ENCODE measurements at regions of chr13 and their contacts with region 1.

Region 1: DNA sequence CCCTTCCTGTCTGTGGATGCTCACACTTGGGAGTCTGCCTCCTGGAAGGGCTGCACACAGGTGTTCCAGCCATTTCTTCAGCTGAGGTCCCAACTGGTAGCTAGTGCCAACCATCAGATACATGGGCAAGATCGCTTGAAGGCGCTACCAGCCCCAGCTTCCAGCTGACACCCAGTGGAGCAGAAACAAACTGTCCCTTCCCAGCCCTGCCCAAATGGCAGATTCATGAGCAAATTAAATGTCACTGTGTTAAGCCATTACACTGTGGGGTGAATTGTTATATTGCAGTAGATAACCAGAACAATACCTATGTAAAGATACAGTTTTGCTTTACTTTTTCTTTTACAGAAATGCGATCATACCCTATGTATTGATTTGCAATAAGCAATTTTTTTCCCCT is 17.6 kb downstream of the ING1 start:
- DNase-seq: no peak
- ATAC-seq: no peak
- H3K4me3 ChIP-seq: no peak overlapping the region
- H3K27ac ChIP-seq: no peak overlapping the region
- H3K4me1 ChIP-seq: no peaks in the 10 kb centered on the region
- H3K27me3 ChIP-seq: no peaks in the 10 kb centered on the region

Region 2: GRCh38 chr13:110799246-110800236 is 68.5 kb after region 1 on chr13:
- intact Hi-C with region 1: loop called in 1 of 4 experiments (anchors 5 kb)
- DNase-seq: peak; percentile 66 to 74 (median 70)
- ATAC-seq: peak; percentile 82 to 88
- H3K4me3 ChIP-seq: no peak overlapping the region
- H3K27ac ChIP-seq: peak overlapping the region; percentile 53
- H3K4me1 ChIP-seq: peaks cover 4% of the 10 kb centered on the region
- H3K27me3 ChIP-seq: no peaks in the 10 kb centered on the region

Measured in right cardiac atrium (tissue), 5 donors.